ENCODE measurements at regions of chr7 and their contacts with region 1.

Region 1: GRCh38 chr7:123682690-123683089 is 27.0 kb downstream of the LMOD2 start:
- DNase-seq: peak; percentile 55
- ATAC-seq: no peak
- H3K4me3 Mint-ChIP-seq: no peak overlapping the region
- H3K27ac Mint-ChIP-seq: no peak overlapping the region
- H3K4me1 Mint-ChIP-seq: no peaks in the 10 kb centered on the region
- H3K27me3 Mint-ChIP-seq: no peaks in the 10 kb centered on the region

Region 2: DNA sequence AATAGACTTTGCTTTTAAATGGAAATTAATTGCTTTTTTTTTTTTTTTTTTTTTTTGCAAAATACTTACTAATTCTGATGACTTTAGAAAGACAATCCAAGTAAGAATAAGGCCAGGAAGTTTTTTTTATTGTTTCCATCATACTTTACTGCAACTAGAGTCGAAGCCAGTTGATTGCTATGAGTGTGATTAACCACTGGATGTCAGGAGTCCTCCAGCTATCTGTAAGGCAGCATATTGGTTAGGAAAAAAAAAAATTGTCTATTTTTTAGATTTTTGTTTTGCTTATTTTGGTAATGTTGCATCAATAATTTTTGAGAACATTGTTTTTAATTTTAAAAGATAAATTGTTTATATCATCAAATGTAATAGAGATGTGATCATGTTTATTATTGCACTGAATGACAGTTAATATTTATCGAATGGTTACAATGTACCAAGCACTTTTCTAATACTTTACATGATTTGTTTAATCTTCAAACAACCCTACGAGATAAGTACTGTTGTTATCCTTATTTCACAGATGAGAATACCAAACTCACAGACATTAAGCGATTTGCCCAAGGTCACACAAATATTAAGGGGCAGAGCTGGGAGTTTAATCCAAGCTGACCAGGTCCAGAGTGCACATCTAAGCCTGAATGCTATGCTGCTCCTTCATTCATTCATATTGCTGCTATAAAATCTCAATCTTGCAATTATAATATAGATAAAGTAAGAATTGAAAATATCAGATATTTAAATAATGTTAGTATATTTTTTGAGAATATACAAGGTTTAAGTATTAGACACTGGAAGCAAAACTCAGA is 46.9 kb before region 1 on chr7:
- CTCF ChIA-PET with region 1: no interaction called
- POLR2A ChIA-PET with region 1: no interaction called
- DNase-seq: no peak
- ATAC-seq: no peak
- H3K4me3 Mint-ChIP-seq: no peak overlapping the region
- H3K27ac Mint-ChIP-seq: no peak overlapping the region
- H3K4me1 Mint-ChIP-seq: no peaks in the 10 kb centered on the region
- H3K27me3 Mint-ChIP-seq: peaks cover 18% of the 10 kb centered on the region

Region 3: GRCh38 chr7:123709525-123709924 is 26.8 kb after region 1 on chr7:
- CTCF ChIA-PET with region 1: interaction called, 10 read pairs
- POLR2A ChIA-PET with region 1: no interaction called
- DNase-seq: no peak
- ATAC-seq: no peak
- H3K4me3 Mint-ChIP-seq: no peak overlapping the region
- H3K27ac Mint-ChIP-seq: peak overlapping the region; percentile 24
- H3K4me1 Mint-ChIP-seq: peaks cover 47% of the 10 kb centered on the region
- H3K27me3 Mint-ChIP-seq: no peaks in the 10 kb centered on the region

Region 4: GRCh38 chr7:123836656-123837055 is 154.0 kb after region 1 on chr7:
- CTCF ChIA-PET with region 1: no interaction called
- POLR2A ChIA-PET with region 1: no interaction called
- DNase-seq: no peak
- ATAC-seq: no peak
- H3K4me3 Mint-ChIP-seq: no peak overlapping the region
- H3K27ac Mint-ChIP-seq: no peak overlapping the region
- H3K4me1 Mint-ChIP-seq: no peaks in the 10 kb centered on the region
- H3K27me3 Mint-ChIP-seq: peaks cover 12% of the 10 kb centered on the region

Region 5: DNA sequence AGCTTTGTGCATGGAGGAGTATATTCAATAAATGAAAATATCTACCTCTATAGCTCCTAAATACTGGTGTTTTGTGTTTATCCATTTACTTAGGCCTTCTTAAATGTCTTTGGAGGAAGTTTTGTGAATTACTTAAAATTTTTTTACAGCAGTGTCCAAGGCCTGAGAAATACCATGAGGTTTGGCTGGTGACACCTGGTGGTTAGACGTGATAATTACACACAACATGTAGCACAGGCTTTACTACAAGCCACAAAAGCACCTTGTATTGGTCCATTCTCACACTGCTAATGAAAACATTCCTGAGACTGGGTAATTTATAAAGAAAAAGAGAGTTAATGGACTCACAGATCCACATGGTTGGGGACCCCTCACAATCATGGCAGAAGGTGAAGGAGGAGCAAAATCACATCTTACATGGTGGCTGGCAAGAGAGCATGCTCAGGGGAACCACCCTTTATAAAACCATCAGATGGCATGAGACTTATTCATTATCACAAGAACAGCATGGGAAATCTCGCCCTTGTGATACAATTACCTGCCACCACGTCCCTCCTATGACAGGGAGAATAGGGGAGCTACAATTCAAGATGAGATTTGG is 182.9 kb after region 1 on chr7:
- CTCF ChIA-PET with region 1: interaction called, 14 read pairs
- POLR2A ChIA-PET with region 1: no interaction called
- DNase-seq: peak; percentile 63
- ATAC-seq: peak; percentile 79
- H3K4me3 Mint-ChIP-seq: no peak overlapping the region
- H3K27ac Mint-ChIP-seq: no peak overlapping the region
- H3K4me1 Mint-ChIP-seq: no peaks in the 10 kb centered on the region
- H3K27me3 Mint-ChIP-seq: no peaks in the 10 kb centered on the region

Region 6: GRCh38 chr7:123871998-123872867 is 189.5 kb after region 1 on chr7:
- CTCF ChIA-PET with region 1: interaction called, 15 read pairs
- POLR2A ChIA-PET with region 1: no interaction called
- DNase-seq: peak; percentile 50
- ATAC-seq: peak; percentile 84
- H3K4me3 Mint-ChIP-seq: no peak overlapping the region
- H3K27ac Mint-ChIP-seq: no peak overlapping the region
- H3K4me1 Mint-ChIP-seq: no peaks in the 10 kb centered on the region
- H3K27me3 Mint-ChIP-seq: peaks cover 4% of the 10 kb centered on the region